Prostate gland (tissue), 2 donors: ENCODE measurements at regions of chr2 and their contacts with region 1.

Region 1: GRCh38 chr2:9555297-9556141 is at the start of gene ADAM17:
- DNase-seq: peak; percentile 96
- H3K4me3 ChIP-seq: peak within 1 kb of the TSS; percentile 88 to 92
- H3K27ac ChIP-seq: peak within 1 kb of the TSS; percentile 97 to 98
- H3K4me1 ChIP-seq: no peaks in the 10 kb centered on the region
- H3K27me3 ChIP-seq: no peaks in the 10 kb centered on the region
- CTCF ChIP-seq: peak; percentile 48 to 89 (median 66)
- POLR2A ChIP-seq: peak; percentile 91
- total RNA-seq, gene ADAM17: 15.8 to 40.0 TPM

Region 2: DNA sequence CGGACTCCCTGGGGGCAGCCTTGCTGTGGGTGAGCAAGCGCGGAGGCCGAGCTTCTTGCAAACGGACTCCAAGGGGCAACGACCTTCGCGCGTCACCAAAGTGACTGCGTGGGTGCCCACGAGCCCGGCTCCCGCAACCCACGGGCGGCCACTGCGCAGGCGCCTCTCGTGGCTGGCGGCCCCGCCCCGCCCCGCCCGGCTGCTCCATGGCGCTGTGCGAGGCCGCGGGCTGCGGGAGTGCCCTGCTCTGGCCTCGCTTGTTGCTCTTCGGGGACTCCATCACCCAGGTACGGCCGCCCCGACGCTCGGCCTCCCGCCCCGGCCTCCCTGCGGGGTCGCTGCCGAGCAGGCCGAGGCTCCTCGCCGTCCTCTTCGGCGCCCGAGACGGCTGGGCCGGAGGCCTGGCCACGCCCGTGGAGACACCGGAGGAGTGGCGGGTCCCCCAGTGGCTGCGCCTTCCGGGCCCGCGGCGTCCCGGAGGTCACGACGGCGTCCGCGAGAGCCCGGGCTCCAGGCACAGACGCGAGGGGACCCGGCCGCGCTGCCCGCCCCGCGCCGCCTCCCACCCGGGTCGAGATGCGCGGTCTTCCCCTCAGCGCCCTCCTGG is 81.1 kb before region 1 on chr2 and contains the start of gene IAH1:
- intact Hi-C with region 1: loop called (anchors 5 kb)
- DNase-seq: peak; percentile 39
- H3K4me3 ChIP-seq: peak within 1 kb of the TSS; percentile 78 to 82
- H3K27ac ChIP-seq: peak within 1 kb of the TSS; percentile 81 to 83
- H3K4me1 ChIP-seq: no peaks in the 10 kb centered on the region
- H3K27me3 ChIP-seq: no peaks in the 10 kb centered on the region
- CTCF ChIP-seq: peak in 2 of 4 experiments; percentile 12 to 15
- POLR2A ChIP-seq: peak; percentile 63
- total RNA-seq, gene IAH1: 48.1 to 61.3 TPM

Region 3: GRCh38 chr2:9630749-9631483 is 75.4 kb after region 1 on chr2 and contains the start of gene YWHAQ:
- intact Hi-C with region 1: loop called (anchors 5 kb)
- DNase-seq: peak; percentile 99
- H3K4me3 ChIP-seq: peak within 1 kb of the TSS; percentile 61 to 76
- H3K27ac ChIP-seq: peak within 1 kb of the TSS; percentile 86 to 94
- H3K4me1 ChIP-seq: peaks cover 6% of the 10 kb centered on the region
- H3K27me3 ChIP-seq: no peaks in the 10 kb centered on the region
- CTCF ChIP-seq: no peak
- POLR2A ChIP-seq: peak; percentile 96
- total RNA-seq, gene YWHAQ: 208 to 248 TPM

Region 4: GRCh38 chr2:9675415-9676351 is 120.2 kb after region 1 on chr2:
- intact Hi-C with region 1: no loop called
- DNase-seq: no peak
- H3K4me3 ChIP-seq: no peak overlapping the region
- H3K27ac ChIP-seq: no peak overlapping the region
- H3K4me1 ChIP-seq: no peaks in the 10 kb centered on the region
- H3K27me3 ChIP-seq: no peaks in the 10 kb centered on the region
- CTCF ChIP-seq: no peak
- POLR2A ChIP-seq: no peak